H1 (cell line): ENCODE measurements at regions of chr1 and their contacts with region 1.

Region 1: GRCh38 chr1:5975133-5975880 is 16.9 kb downstream of the NPHP4 start:
- DNase-seq: peak in 1 of 2 experiments; percentile 73
- H3K4me3 ChIP-seq: no peak overlapping the region
- H3K27ac ChIP-seq: no peak overlapping the region
- H3K4me1 ChIP-seq: peaks cover 0 to 5% (median 4%) of the 10 kb centered on the region in 4 experiments; a peak in 4 of 7 replicates
- H3K27me3 ChIP-seq: no peaks in the 10 kb centered on the region
- CTCF ChIP-seq: peak; percentile 88 to 98 (median 96)
- EP300 ChIP-seq: no peak
- POLR2A ChIP-seq: no peak
- RAD21 ChIP-seq: peak; percentile 96 to 97

Region 2: DNA sequence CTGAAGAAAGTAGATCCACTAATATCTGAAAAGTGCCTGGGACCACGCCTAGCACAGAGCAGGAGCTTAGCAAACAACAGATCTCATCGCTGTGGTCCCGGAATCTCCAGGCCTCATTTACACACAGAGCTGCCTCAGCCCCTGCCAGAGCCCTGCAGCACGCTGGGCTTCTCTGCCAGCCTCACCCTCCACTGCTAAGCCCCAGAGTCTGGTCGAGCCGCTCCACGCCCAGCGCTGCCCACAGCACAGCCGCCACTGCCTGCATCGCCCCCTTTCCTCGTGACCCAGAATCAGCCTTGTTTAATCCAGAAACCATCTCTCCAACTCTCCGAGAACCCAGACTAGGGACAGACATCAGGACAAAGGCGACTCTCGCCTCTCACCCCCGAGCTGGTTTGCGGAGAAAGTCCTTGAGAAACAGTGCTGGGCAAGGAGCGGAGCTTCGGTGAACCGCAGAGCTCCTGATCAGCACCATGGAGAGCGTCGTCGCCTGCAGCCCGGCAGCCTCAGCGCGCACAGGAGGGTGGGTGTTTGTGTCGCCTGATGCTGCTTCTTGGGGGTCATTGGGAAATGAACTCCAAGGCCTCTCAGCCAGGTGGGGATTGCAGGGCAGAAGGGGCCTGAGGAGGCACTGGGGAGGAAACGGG is 128.2 kb before region 1 on chr1:
- CTCF ChIA-PET with region 1: interaction called, 10 read pairs
- POLR2A ChIA-PET with region 1: no interaction called
- DNase-seq: peak; percentile 41 to 84
- H3K4me3 ChIP-seq: no peak overlapping the region
- H3K27ac ChIP-seq: no peak overlapping the region
- H3K4me1 ChIP-seq: peaks cover 0 to 9% (median 6%) of the 10 kb centered on the region in 4 experiments; a peak in 5 of 7 replicates
- H3K27me3 ChIP-seq: no peaks in the 10 kb centered on the region; a peak in 3 of 7 replicates
- CTCF ChIP-seq: no peak
- EP300 ChIP-seq: no peak
- POLR2A ChIP-seq: no peak
- RAD21 ChIP-seq: 0 out of 4 replicates have a peak, but pooled peaks of 1 of the 2 experiments have one; percentile 11

Region 3: GRCh38 chr1:5877761-5878530 is 97.4 kb before region 1 on chr1:
- CTCF ChIA-PET with region 1: interaction called, 17 read pairs
- POLR2A ChIA-PET with region 1: no interaction called
- DNase-seq: no peak
- H3K4me3 ChIP-seq: no peak overlapping the region
- H3K27ac ChIP-seq: peak overlapping the region; percentile 23; the same call in 1 of the 2 replicates
- H3K4me1 ChIP-seq: no peaks in the 10 kb centered on the region; a peak in 1 of 7 replicates
- H3K27me3 ChIP-seq: no peaks in the 10 kb centered on the region
- CTCF ChIP-seq: no peak
- EP300 ChIP-seq: no peak
- POLR2A ChIP-seq: no peak
- RAD21 ChIP-seq: no peak

Region 4: DNA sequence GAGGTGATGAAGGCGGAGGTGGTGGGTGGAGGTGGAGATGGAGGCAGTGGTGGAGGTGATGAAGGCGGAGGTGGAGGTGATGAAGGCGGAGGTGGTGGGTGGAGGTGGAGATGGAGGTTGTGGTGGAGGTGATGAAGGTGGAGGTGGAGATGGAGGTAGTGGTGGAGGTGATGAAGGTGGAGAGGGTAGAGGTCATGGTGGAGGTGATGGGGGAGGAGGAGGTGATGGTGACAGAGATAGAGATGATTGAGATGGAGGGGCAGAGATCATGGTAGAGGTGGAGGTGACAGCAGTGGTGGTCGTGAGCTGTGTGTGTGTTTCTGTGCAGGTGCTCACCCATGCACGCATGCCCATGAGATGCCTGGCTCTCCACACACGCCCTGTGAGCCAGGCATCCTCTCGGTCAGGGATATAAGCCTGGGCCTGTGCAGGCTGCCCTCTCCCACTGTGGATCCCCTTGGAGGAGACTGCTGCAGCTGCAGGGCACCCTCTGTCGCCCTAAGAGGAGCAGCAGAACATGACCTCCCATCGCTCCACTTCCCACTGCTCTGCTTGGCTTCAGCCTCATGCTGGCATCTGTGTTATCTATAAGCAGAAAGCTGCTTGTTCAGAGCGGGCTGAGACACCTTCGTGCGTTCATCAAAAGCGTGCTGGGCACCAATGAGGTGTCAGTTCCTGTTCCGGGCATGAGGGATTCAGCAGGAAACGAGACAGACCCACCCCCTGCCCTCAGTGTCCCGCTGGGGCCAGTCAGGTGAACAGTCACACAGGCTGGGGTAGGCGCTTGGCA is 37.4 kb after region 1 on chr1:
- CTCF ChIA-PET with region 1: no interaction called
- POLR2A ChIA-PET with region 1: no interaction called
- DNase-seq: no peak
- H3K4me3 ChIP-seq: no peak overlapping the region
- H3K27ac ChIP-seq: no peak overlapping the region
- H3K4me1 ChIP-seq: no peaks in the 10 kb centered on the region
- H3K27me3 ChIP-seq: no peaks in the 10 kb centered on the region
- CTCF ChIP-seq: no peak
- EP300 ChIP-seq: no peak
- POLR2A ChIP-seq: no peak
- RAD21 ChIP-seq: no peak

Region 5: DNA sequence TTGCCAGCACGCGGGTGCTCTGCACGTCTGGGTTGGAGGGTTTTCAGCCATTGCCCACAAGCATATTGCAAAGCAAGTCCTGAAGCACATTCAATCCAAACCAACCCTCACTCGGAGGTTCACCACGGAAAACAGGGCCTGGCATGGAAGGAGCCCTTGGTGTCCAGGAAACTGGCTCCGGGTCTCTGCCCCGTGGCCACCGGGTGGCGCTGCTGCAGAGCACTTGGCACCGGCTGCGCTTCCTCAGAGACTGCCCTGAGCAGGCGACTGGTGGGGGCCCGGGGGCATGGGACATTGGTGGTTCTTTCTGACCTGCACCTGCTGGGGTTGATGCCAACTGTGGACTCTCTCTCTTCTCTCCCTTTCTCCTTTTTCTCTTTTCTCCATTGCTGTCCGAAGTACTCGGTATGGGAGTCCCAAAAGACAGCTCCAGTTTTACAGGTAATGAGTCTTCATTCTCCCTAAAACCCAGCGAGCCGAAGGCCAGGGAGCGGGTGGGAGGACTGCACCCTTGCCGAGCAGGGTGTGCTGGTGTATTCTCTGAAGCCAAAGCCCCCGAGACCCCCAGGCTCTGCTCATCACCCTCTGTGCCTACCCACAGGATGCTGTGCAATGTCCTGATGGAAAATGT is 66.2 kb after region 1 on chr1:
- CTCF ChIA-PET with region 1: no interaction called
- POLR2A ChIA-PET with region 1: no interaction called
- DNase-seq: peak in 1 of 2 experiments; percentile 92
- H3K4me3 ChIP-seq: no peak overlapping the region
- H3K27ac ChIP-seq: no peak overlapping the region
- H3K4me1 ChIP-seq: peaks cover 0 to 5% (median 3%) of the 10 kb centered on the region in 4 experiments; a peak in 3 of 7 replicates
- H3K27me3 ChIP-seq: no peaks in the 10 kb centered on the region; a peak in 1 of 7 replicates
- CTCF ChIP-seq: peak in 2 of 3 experiments; percentile 94 to 96; a peak in 3 of 4 replicates
- EP300 ChIP-seq: no peak
- POLR2A ChIP-seq: no peak
- RAD21 ChIP-seq: peak; percentile 88 to 92